Activated B cell treated with CpG ODN at 0.5 μM for 24 hours (primary cell): ENCODE measurements at regions of chr10 and their contacts with region 1.

Region 1: DNA sequence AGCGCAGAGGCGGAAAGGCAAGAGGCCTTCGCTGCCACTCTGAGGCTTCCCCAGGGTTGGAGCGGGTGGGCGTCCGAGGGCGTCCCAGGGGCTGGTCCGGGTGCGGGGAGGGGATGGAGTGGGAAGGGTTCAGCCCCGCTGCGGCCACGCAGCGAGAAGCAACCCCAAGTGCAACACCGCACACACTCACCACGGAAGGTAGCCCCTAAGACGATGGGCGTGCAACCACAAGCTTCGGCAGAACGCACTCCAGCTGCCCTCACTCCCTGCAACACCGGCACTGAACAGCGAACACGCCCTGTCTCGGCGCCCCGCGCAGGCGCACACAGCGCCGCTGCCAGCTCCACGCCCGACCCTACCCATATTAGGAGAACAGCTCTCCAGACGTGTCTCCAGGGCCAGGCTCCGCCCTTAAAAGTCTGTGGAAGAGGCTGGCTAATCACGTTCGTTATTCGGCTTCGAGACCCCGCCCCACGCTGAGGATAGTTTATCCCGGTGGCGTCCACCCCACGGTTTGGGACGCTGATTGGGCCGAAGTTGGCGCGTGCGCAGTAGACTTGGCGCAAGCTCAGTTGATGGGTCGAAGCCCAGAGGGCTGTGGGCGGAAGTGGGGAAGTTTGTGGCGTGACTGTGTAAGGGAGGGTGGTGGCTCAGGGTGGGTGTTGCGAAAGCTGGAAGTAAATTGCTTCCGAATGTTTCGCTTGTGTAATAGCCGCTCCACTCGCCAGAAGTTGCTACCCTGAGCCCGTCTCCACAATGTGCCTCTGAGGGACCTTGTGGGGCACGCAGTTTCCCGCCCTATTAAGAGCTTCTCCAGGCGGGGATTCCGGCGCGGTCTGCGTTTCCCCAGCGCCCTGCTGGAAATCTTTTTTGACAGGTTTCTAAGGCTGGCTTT is at the start of gene RSU1:
- DNase-seq: peak; percentile 100
- ATAC-seq: peak; percentile 98
- H3K4me3 Mint-ChIP-seq: peak within 1 kb of the TSS; percentile 94
- H3K27ac Mint-ChIP-seq: peak within 1 kb of the TSS; percentile 94
- H3K4me1 Mint-ChIP-seq: peaks cover 26% of the 10 kb centered on the region
- H3K27me3 Mint-ChIP-seq: no peaks in the 10 kb centered on the region
- CTCF ChIP-seq: no peak
- total RNA-seq, gene RSU1: 59.2 and 60.7 TPM in 2 replicates

Region 2: GRCh38 chr10:16436758-16437539 is 380.4 kb before region 1 on chr10 and contains the start of gene PTER:
- CTCF ChIA-PET with region 1: no interaction called
- POLR2A ChIA-PET with region 1: interaction called, 13 read pairs
- intact Hi-C with region 1: loop called (anchors 1 kb)
- DNase-seq: peak; percentile 97
- ATAC-seq: peak; percentile 99
- H3K4me3 Mint-ChIP-seq: peak within 1 kb of the TSS; percentile 95
- H3K27ac Mint-ChIP-seq: peak within 1 kb of the TSS; percentile 88
- H3K4me1 Mint-ChIP-seq: peaks cover 48% of the 10 kb centered on the region
- H3K27me3 Mint-ChIP-seq: peaks cover 3% of the 10 kb centered on the region
- CTCF ChIP-seq: no peak
- total RNA-seq, gene PTER: 14.9 and 15.0 TPM in 2 replicates

Region 3: GRCh38 chr10:17200912-17201793 is 383.8 kb after region 1 on chr10 and contains the start of gene TRDMT1:
- CTCF ChIA-PET with region 1: interaction called, 3 read pairs
- POLR2A ChIA-PET with region 1: interaction called, 14 read pairs
- intact Hi-C with region 1: loop called (anchors 1 kb)
- DNase-seq: peak; percentile 81
- ATAC-seq: peak; percentile 86
- H3K4me3 Mint-ChIP-seq: peak within 1 kb of the TSS; percentile 98
- H3K27ac Mint-ChIP-seq: peak within 1 kb of the TSS; percentile 94
- H3K4me1 Mint-ChIP-seq: peaks cover 42% of the 10 kb centered on the region
- H3K27me3 Mint-ChIP-seq: no peaks in the 10 kb centered on the region
- CTCF ChIP-seq: no peak
- total RNA-seq, gene TRDMT1: 15.0 and 19.9 TPM in 2 replicates

Region 4: GRCh38 chr10:17673456-17674061 is 856.2 kb after region 1 on chr10:
- CTCF ChIA-PET with region 1: no interaction called
- POLR2A ChIA-PET with region 1: interaction called, 11 read pairs
- intact Hi-C with region 1: no loop called
- DNase-seq: no peak
- ATAC-seq: no peak
- H3K4me3 Mint-ChIP-seq: no peak overlapping the region
- H3K27ac Mint-ChIP-seq: no peak overlapping the region
- H3K4me1 Mint-ChIP-seq: peaks cover 38% of the 10 kb centered on the region
- H3K27me3 Mint-ChIP-seq: no peaks in the 10 kb centered on the region
- CTCF ChIP-seq: no peak